ENCODE measurements at regions of chr2 and their contacts with region 1.

Region 1: GRCh38 chr2:190759749-190760213 is 110.9 kb downstream of the NAB1 start:
- DNase-seq: no peak
- ATAC-seq: no peak
- H3K4me3 Mint-ChIP-seq: peak overlapping the region; percentile 15
- H3K27ac Mint-ChIP-seq: no peak overlapping the region
- H3K4me1 Mint-ChIP-seq: peaks cover 54% of the 10 kb centered on the region
- H3K27me3 Mint-ChIP-seq: no peaks in the 10 kb centered on the region

Region 2: DNA sequence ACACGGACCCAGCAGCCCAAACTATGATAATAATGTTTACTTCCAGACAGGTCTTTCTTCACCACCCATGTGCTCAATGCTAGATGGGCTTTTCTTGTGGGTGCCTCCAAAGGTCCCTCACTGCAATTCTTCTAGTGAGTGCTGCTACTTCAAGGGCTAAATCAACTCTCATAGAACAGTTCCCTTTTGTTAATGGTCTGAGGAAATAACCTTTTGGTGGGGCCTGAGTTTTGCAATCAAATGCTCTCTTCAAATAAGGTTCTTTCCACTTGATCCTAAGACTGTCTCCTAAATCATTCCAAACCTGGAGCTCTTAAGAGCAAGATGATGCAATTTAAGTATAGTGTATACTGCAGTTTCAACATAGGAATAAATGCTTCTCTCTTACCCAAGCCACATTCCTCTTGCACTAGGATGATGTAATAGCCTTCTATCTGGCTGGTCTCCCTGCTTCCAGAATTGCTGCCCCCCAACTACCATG is 231.2 kb before region 1 on chr2:
- CTCF ChIA-PET with region 1: no interaction called
- POLR2A ChIA-PET with region 1: no interaction called
- intact Hi-C with region 1: no loop called
- DNase-seq: no peak
- ATAC-seq: no peak
- H3K4me3 Mint-ChIP-seq: no peak overlapping the region
- H3K27ac Mint-ChIP-seq: peak overlapping the region; percentile 44
- H3K4me1 Mint-ChIP-seq: peaks cover 78% of the 10 kb centered on the region
- H3K27me3 Mint-ChIP-seq: no peaks in the 10 kb centered on the region

Region 3: DNA sequence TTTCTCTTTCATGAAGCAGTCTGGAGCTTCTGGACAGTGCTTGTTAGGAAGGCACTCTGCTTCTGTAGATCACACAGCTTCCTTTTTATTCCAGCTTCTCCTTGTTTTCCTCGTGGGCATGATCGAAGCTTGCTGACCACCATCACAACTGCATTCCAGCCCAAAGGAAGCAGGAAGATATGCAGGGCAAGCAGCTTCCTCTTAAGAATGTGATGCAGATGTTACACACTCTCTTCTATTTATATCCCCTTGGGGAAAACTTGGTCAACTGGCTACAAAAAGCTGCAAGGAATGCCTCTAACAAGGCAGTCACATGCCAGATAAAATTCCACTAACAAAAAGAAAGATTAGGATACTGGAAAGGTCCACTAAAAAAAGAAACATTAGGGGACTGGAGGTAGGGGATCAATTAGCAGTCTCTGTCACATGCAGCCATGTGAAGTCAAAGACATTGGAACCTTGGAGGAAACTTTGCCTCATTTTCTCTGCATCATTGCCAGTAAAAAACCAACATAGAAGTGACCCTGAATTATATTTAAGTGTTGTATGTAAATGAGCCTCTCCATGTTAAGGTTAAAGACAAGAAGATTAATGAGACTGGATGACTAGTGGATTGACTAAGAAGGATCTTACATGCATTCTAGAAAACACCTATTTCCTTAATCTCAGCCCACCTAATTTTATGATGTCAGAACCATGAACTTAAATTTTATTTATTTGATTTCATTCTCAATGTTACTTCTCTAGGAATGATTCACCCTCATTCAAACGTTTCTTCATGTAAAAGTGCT is 12.6 kb before region 1 on chr2:
- CTCF ChIA-PET with region 1: interaction called, 12 read pairs
- POLR2A ChIA-PET with region 1: no interaction called
- intact Hi-C with region 1: no loop called
- DNase-seq: no peak
- ATAC-seq: peak; percentile 84
- H3K4me3 Mint-ChIP-seq: no peak overlapping the region
- H3K27ac Mint-ChIP-seq: peak overlapping the region; percentile 15
- H3K4me1 Mint-ChIP-seq: peaks cover 31% of the 10 kb centered on the region
- H3K27me3 Mint-ChIP-seq: no peaks in the 10 kb centered on the region